ENCODE measurements at regions of chr3 and their contacts with region 1.

Region 1: DNA sequence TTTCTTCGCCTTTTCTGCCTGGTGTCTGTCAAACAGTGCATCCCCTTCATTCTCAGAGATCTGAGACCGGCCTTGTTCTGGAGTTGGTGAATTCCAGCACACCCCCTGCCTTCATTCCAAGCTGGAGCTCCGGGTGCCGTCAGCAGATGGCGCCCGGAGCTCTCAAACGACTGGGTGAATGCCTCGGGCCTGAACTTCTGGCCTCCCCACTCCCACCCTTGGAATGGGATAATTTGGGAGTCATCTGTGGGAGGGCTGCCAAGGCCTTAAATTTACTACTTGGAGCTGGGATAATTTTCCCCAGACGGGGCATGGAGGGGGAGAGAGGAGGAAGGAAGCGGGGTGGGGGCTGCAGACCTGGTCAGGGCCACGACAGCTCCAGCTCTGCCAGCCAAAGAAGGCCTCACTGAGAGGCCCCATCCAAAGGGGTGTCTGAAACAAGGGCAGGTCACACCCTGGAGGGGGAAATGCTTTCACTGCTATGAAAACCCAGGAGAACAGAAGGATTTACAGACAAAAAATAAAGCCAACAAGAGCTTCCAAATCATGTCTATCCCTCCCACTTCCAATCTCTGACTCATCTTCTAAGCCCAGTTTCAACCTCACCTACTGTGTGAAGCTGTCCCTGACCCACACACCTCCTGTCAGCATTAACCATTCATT is 187.9 kb downstream of the OPA1 start:
- DNase-seq: no peak
- H3K4me3 ChIP-seq: no peak overlapping the region
- CTCF ChIP-seq: peak; percentile 74

Region 2: GRCh38 chr3:193768070-193768394 is 12.9 kb before region 1 on chr3:
- CTCF ChIA-PET with region 1: interaction called, 37 read pairs
- POLR2A ChIA-PET with region 1: no interaction called
- DNase-seq: no peak
- H3K4me3 ChIP-seq: no peak overlapping the region
- CTCF ChIP-seq: no peak

Region 3: GRCh38 chr3:194134757-194135528 is 354.0 kb after region 1 on chr3:
- CTCF ChIA-PET with region 1: interaction called, 100 read pairs
- POLR2A ChIA-PET with region 1: interaction called, 7 read pairs
- DNase-seq: peak; percentile 85
- H3K4me3 ChIP-seq: peak overlapping the region; percentile 62
- CTCF ChIP-seq: no peak

Region 4: DNA sequence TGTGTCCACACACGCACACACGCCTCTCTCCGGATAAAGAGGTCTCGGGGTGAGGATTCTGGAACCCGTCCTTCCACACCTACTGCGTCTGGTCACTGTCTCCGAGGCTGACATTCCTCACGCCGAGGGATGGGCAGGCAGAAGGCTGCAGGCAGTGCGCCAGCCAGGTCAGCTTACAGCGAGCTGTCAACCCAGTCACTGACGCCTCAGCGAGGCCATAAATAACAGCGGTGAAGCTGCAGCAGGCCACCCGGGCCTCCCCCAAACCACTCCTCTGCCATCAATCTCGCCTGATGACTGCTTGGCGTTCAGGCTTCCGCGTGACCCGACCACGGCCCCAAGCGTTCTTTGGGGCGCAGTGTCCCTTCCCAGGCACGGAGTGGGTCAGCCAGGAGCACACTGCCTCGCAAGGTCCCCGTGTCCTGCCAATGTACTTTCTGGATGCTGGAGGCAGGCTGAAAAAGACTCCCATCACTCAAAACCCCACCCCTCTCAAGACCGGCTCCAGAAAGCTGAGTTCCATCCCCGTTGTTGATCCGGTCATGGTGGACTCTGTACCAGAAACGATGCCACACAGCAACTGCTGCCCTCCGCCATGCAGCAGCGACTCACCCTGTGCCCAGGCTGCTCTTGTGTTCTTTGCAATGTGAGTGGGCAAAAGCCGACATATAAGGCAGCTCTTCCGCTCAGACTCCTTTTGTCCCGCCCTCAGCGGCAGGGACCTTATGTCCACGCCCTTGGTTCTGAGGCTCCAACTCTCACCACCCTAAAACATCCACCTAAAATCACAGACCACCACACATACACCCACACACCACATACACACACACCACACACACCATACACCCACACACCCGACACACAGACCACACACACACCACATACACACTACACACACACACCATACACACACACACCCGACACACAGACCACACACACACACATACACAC is 543.1 kb after region 1 on chr3:
- CTCF ChIA-PET with region 1: interaction called, 416 read pairs
- POLR2A ChIA-PET with region 1: no interaction called
- DNase-seq: no peak
- H3K4me3 ChIP-seq: peak overlapping the region; percentile 37
- CTCF ChIP-seq: no peak